Activated B cell treated with CpG ODN at 0.5 μM for 24 hours (primary cell): ENCODE measurements at regions of chr12 and their contacts with region 1.

Region 1: GRCh38 chr12:94340573-94340972 is 119.1 kb downstream of the CEP83 start:
- DNase-seq: no peak
- ATAC-seq: no peak
- H3K4me3 Mint-ChIP-seq: no peak overlapping the region
- H3K27ac Mint-ChIP-seq: no peak overlapping the region
- H3K4me1 Mint-ChIP-seq: peaks cover 4% of the 10 kb centered on the region
- H3K27me3 Mint-ChIP-seq: no peaks in the 10 kb centered on the region
- CTCF ChIP-seq: no peak

Region 2: DNA sequence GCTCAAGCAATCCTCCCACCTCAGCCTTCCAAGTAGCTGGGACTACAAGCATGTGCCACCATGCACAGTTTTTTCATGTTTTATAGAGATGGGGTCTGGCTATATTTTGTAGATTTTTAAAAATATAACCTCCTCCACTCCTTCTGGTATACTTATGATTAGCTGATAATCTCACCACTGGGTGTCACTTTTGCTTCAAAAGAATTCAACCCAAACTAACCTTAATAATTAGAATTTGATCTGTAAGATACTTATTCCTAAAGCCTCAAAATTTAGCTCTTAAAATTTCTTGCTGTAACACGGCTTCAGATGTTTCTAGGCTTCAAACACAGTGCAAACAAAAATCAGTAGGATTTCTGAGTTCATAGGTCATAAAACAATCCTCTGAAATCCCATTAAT is 11.2 kb before region 1 on chr12:
- CTCF ChIA-PET with region 1: no interaction called
- POLR2A ChIA-PET with region 1: no interaction called
- intact Hi-C with region 1: loop called (anchors 2 kb)
- DNase-seq: no peak
- ATAC-seq: no peak
- H3K4me3 Mint-ChIP-seq: no peak overlapping the region
- H3K27ac Mint-ChIP-seq: no peak overlapping the region
- H3K4me1 Mint-ChIP-seq: peaks cover 3% of the 10 kb centered on the region
- H3K27me3 Mint-ChIP-seq: no peaks in the 10 kb centered on the region
- CTCF ChIP-seq: no peak

Region 3: DNA sequence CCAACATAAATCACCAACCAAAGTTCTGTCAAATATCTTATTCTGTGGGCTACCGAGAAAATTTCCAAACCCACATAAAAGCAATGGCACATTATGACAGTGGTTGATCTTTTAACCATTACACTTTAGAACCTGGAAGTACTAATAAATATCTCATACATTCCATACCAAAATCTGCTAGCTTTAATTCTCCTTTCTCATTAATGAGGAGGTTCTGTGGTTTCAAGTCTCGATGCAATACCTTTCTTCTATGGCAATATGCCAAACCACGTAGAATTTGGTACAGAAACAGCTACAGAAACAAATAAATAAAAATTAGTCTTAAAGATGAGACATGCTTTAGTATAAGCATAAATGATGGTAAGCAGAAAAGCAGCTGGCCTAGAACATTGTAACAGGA is 1954.3 kb after region 1 on chr12:
- CTCF ChIA-PET with region 1: no interaction called
- POLR2A ChIA-PET with region 1: no interaction called
- intact Hi-C with region 1: no loop called
- DNase-seq: no peak
- ATAC-seq: no peak
- H3K4me3 Mint-ChIP-seq: no peak overlapping the region
- H3K27ac Mint-ChIP-seq: no peak overlapping the region
- H3K4me1 Mint-ChIP-seq: peaks cover 2% of the 10 kb centered on the region
- H3K27me3 Mint-ChIP-seq: no peaks in the 10 kb centered on the region
- CTCF ChIP-seq: no peak